HAP-1 (cell line): ENCODE measurements at regions of chr16 and their contacts with region 1.

Region 1: GRCh38 chr16:57300387-57301125 is 16.1 kb upstream of the PLLP start:
- DNase-seq: peak; percentile 98
- H3K4me3 ChIP-seq: peak overlapping the region; percentile 48
- H3K4me1 ChIP-seq: peaks cover 6% of the 10 kb centered on the region
- H3K27me3 ChIP-seq: no peaks in the 10 kb centered on the region

Region 2: DNA sequence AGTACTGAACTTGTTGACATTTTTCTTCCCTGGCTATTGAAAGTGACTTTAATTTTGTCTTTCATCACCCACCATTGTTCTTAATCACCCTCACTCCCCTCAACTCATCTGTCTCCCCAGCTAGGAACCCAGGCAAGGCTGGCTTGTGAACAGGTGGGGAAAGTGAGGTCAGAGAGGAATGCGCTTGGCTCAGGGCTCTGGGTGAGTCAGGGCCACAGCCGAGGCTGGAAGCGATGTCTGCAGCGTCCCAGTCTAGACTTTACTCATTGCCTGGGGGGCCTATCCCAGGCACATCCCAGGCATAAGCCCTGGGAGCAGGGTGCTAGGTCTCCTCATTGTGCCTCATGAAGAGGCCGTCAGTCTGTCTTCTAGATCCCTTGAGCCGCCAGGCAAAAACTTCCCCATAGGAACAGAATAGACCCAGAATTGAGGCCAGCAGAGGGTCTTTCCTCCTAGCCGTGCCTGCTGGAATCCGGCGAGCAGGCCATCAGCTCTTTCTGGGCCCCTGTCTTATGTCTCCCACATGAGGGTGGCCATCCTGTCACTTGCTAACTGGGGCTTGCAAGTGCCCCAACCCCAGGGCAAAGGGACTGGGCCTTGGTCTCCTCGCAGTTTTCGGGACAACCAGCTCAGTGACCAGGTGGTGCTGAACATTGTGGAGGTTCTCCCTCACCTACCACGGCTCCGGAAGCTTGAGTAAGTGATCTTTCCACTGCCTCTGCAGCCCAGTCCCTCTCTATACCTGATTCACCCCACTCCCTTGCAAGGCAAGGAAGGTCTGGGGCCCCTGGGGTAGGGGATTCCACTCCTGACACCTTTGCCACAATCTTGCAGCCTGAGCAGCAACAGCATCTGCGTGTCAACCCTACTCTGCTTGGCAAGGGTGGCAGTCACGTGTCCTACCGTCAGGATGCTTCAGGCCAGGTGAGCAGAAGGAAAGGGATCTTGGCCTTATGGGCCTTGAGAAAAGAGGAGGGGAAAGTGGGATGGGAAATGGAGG is 271.1 kb before region 1 on chr16:
- in situ Hi-C with region 1: no loop called
- DNase-seq: no peak
- H3K4me3 ChIP-seq: no peak overlapping the region
- H3K4me1 ChIP-seq: no peaks in the 10 kb centered on the region
- H3K27me3 ChIP-seq: no peaks in the 10 kb centered on the region

Region 3: GRCh38 chr16:57106767-57107166 is 193.8 kb before region 1 on chr16:
- in situ Hi-C with region 1: no loop called
- DNase-seq: no peak
- H3K4me3 ChIP-seq: no peak overlapping the region
- H3K4me1 ChIP-seq: no peaks in the 10 kb centered on the region; the same call in 1 of the 2 replicates
- H3K27me3 ChIP-seq: no peaks in the 10 kb centered on the region

Region 4: GRCh38 chr16:57394444-57394843 is 93.9 kb after region 1 on chr16:
- in situ Hi-C with region 1: no loop called
- DNase-seq: no peak
- H3K4me3 ChIP-seq: no peak overlapping the region
- H3K4me1 ChIP-seq: no peaks in the 10 kb centered on the region
- H3K27me3 ChIP-seq: peaks cover 16% of the 10 kb centered on the region

Region 5: GRCh38 chr16:57413301-57413730 is 112.8 kb after region 1 on chr16:
- in situ Hi-C with region 1: loop called (anchors 5 kb)
- DNase-seq: no peak
- H3K4me3 ChIP-seq: no peak overlapping the region
- H3K4me1 ChIP-seq: peaks cover 8% of the 10 kb centered on the region
- H3K27me3 ChIP-seq: no peaks in the 10 kb centered on the region

Region 6: GRCh38 chr16:57519796-57520360 is 219.3 kb after region 1 on chr16:
- in situ Hi-C with region 1: loop called (anchors 5 kb)
- DNase-seq: peak; percentile 51 to 89
- H3K4me3 ChIP-seq: no peak overlapping the region
- H3K4me1 ChIP-seq: no peaks in the 10 kb centered on the region
- H3K27me3 ChIP-seq: no peaks in the 10 kb centered on the region